Right ventricle myocardium inferior (tissue), 1 donor: ENCODE measurements at regions of chr3 and their contacts with region 1.

Region 1: DNA sequence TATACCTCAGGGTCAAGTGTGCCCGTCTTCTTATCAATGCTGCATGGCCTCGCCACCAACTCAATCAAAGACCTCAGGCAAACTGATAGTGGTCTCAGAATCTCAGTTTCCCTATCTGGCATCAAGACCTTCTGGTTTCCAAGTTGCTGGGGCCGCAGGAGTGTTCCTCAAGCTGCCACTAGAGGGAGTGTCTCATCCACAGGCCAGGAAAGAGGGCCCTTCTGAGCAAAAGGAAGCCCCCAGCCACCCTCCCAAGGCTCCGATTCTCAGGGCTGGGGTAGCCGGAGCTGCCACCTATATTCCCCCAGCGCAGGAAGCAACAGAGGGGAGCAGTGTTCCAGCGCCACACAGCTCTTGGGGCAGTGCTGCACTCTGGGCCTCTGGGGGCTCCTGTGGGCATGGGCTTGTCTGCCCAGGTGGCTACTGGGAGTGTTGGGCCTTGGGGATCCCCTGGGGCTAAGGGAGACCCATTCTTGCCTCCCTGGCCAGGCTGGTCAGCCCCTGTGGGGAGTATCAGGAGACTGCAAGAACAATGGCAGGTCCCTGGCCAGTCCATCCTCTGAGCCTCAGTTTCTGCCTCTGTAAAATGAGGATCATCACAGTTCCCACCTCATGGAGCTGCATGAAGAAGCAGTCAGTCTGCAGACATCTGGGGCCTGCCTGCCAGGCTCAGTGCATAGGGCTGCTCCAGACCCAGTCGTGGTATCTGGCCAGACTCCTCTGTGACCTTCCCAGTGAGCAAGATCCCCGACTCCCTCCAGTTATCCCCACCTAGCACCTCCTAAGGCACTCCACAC is 23.4 kb upstream of the SEC13 start:
- DNase-seq: peak; percentile 57
- ATAC-seq: no peak

Region 2: DNA sequence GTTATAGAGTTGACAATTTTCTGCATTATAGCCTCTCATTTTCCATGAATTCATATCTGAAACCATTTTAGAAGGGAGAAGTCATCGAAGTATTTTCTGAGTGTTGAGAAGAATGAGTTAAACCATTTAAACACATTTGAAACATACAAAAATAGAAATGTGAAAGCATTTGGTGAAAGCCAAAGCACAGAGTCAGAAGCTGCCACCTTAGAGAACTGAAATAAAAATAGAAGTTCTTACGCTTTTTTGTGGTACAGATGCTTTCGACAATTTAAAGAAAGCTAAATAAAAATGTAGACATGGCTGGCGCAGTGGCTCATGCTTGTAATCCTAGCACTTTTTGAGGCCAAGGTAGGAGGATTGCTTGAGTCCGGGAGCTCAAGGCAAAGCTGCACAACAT is 245.3 kb before region 1 on chr3:
- intact Hi-C with region 1: no loop called
- DNase-seq: no peak
- ATAC-seq: no peak

Region 3: GRCh38 chr3:10694179-10694578 is 349.8 kb after region 1 on chr3:
- intact Hi-C with region 1: loop called (anchors 1 kb)
- DNase-seq: no peak
- ATAC-seq: no peak

Region 4: DNA sequence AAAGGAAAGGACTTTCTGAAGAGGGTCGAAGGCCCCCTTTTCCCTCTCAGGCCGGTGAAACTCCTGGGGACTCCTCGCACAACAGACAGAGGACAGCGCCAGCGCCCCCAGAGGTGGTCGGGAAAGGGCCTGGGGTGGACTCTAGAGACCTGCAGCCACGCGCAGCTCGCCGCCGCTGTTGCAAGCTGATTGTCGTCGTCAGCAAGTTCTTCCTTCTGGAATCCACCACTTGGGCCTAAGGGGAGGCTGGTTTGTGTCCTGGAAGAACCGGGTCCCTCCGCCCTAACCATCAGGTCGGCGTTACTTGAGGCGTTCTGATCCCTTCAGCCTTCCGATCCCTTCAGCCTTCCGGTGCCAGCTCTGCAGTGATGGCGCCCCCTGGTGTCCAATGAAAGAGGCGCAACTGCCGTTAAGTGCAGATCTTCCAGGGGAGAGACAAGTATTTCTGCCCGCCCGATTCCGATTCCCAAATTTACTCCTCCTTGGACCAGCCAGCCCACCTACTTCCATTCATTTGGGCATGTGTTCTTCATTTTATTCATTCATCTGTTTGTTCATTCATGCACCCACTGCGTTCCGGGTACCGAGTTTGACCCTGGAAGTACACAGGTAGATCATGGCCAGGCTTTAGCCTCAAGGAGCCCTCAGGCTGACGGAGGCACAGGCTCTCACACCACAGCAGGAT is 394.5 kb after region 1 on chr3:
- intact Hi-C with region 1: loop called (anchors 2 kb)
- DNase-seq: peak; percentile 85
- ATAC-seq: peak; percentile 50